ENCODE measurements at regions of chr3 and their contacts with region 1.

Region 1: GRCh38 chr3:66138336-66139313 is 82.2 kb upstream of the SLC25A26 start:
- DNase-seq: peak; percentile 65
- ATAC-seq: peak; percentile 93
- H3K4me3 ChIP-seq: no peak overlapping the region
- H3K27ac ChIP-seq: no peak overlapping the region
- H3K4me1 ChIP-seq: no peaks in the 10 kb centered on the region
- H3K27me3 ChIP-seq: peaks cover 0 to under 1% of the 10 kb centered on the region in 2 experiments; a peak in 1 of 5 replicates
- CTCF ChIP-seq: peak; percentile 87
- EP300 ChIP-seq: no peak
- POLR2A ChIP-seq: no peak
- RAD21 ChIP-seq: peak; percentile 86

Region 2: DNA sequence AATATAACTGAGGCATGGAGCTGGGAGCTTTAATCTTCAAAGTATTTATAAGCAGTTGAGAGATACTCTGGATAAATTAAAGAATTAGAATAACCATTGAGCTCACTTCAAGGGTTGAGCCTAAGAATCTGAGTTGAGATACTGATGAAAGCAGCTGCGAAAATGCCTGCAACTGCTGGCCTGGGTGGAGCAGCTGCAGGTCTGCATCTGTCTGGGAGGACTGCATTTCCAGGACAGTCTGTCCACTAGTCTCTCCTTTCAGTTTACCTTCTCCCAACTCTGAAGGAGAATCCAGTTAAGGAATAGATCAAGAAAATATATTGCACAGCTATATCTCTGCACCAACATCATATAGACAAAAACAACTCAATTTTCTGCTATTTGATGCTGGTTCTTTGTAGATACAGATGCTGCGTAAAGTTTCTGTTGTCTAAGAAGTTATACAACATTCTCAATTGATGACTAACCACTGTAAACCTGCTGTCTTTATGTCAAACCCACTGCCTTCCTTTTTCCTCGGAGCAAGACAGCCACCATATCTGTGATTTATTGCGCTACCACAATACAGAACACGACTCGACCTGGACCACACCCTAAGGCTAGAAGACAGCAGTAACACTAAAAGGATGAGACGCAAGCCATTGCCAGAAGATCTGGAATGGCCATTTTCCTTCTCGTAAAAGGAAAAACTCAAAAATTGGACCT is 345.0 kb before region 1 on chr3:
- CTCF ChIA-PET with region 1: no interaction called
- POLR2A ChIA-PET with region 1: no interaction called
- in situ Hi-C with region 1: loop called (anchors 5 kb)
- intact Hi-C with region 1: loop called (anchors 2 kb)
- DNase-seq: no peak
- ATAC-seq: no peak
- H3K4me3 ChIP-seq: no peak overlapping the region
- H3K27ac ChIP-seq: no peak overlapping the region
- H3K4me1 ChIP-seq: no peaks in the 10 kb centered on the region
- H3K27me3 ChIP-seq: no peaks in the 10 kb centered on the region
- CTCF ChIP-seq: no peak
- EP300 ChIP-seq: no peak
- POLR2A ChIP-seq: no peak
- RAD21 ChIP-seq: no peak

Region 3: DNA sequence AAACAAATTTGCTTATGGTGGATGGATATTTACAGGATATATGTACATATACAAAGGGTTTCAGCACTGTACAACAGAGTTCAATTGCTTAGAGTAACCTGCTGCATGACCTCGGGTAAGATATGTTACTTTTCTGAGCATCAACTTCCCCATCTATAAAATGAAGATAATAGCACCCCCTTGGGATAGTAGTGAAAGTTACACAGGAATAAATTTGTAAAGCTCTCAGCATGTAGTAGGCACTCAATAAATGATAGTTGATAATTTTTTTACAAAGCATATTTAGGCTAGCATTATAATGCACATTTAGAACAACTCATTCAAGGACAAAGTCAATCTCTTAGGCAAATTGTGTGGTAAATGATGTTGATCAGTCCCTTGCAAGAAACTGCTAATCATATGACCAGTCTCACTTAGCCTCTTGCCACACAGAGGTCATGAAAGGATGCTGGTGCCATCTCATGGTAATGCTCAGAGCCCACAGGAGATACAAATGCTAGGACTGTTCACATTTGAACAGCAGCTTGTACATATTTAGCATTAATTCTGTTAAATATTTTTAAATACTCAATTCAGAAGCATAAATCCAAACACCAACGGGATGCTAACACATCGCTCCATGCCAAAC is 223.8 kb before region 1 on chr3:
- CTCF ChIA-PET with region 1: no interaction called
- POLR2A ChIA-PET with region 1: no interaction called
- in situ Hi-C with region 1: no loop called
- intact Hi-C with region 1: loop called (anchors 1 kb)
- DNase-seq: no peak
- ATAC-seq: no peak
- H3K4me3 ChIP-seq: no peak overlapping the region
- H3K27ac ChIP-seq: no peak overlapping the region
- H3K4me1 ChIP-seq: peaks cover 7% of the 10 kb centered on the region
- H3K27me3 ChIP-seq: no peaks in the 10 kb centered on the region
- CTCF ChIP-seq: no peak; the same call in 1 of the 2 replicates
- EP300 ChIP-seq: no peak
- POLR2A ChIP-seq: no peak
- RAD21 ChIP-seq: no peak

Region 4: GRCh38 chr3:65963787-65964677 is 174.6 kb before region 1 on chr3:
- CTCF ChIA-PET with region 1: no interaction called
- POLR2A ChIA-PET with region 1: no interaction called
- in situ Hi-C with region 1: no loop called
- intact Hi-C with region 1: loop called (anchors 5 kb)
- DNase-seq: peak; percentile 47
- ATAC-seq: peak; percentile 53
- H3K4me3 ChIP-seq: no peak overlapping the region
- H3K27ac ChIP-seq: peak overlapping the region; percentile 23
- H3K4me1 ChIP-seq: peaks cover 56% of the 10 kb centered on the region
- H3K27me3 ChIP-seq: no peaks in the 10 kb centered on the region
- CTCF ChIP-seq: no peak
- EP300 ChIP-seq: no peak
- POLR2A ChIP-seq: no peak
- RAD21 ChIP-seq: no peak

Region 5: DNA sequence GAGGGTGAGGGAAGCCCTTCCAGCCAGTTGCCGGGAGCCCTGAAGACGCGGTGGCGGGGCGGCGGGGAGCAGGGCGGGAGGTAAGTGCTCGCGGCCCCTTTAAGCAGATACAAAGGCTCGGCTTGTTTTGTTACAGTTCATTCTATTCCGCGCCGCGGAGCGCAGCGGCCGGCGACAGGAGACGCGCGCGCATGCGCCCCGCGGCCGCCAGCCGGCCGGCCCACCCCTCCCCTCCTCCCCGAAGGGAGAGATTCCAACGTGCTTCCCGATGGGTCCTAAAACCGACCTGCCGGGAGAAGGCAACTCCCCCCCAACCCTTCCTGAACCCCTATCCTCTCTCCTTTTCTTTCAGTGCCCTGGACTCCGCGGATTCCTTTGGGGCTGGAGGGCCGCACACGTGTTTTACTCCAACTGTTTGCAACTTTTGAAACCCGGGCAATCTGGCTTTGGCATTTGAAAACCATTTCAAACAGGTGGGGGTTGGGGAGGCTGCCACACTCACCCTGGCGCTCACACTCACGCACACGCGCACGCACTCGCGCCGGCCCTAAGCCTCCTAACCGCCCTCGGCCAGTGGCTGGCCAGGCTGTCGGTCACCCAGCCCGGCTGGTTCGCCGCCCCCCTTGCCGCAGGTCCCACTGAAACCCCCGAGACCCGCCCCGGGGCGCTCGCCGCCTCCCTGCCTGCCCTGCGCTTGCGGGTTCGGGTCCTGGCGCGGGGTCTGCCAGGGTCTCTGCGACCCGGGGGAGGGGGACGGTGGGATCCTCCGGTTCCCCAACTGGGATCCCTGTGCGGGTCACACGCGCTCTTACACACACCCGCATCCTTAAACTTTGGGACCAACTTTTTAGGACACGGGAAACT is 99.7 kb before region 1 on chr3 and contains the start of gene MAGI1:
- CTCF ChIA-PET with region 1: no interaction called
- POLR2A ChIA-PET with region 1: no interaction called
- in situ Hi-C with region 1: no loop called
- intact Hi-C with region 1: loop called (anchors 2 kb)
- DNase-seq: peak; percentile 90
- ATAC-seq: peak; percentile 87
- H3K4me3 ChIP-seq: peak within 1 kb of the TSS; percentile 85 to 97 (median 92)
- H3K27ac ChIP-seq: peak within 1 kb of the TSS; percentile 98
- H3K4me1 ChIP-seq: peaks cover 54% of the 10 kb centered on the region
- H3K27me3 ChIP-seq: no peaks in the 10 kb centered on the region; a peak in 1 of 5 replicates
- CTCF ChIP-seq: no peak; the same call in 1 of the 2 replicates
- EP300 ChIP-seq: no peak
- POLR2A ChIP-seq: peak; percentile 32 to 39; a peak in 2 of 4 replicates
- RAD21 ChIP-seq: no peak
- total RNA-seq, gene MAGI1: 25.3 and 26.0 TPM in 2 replicates

Region 6: DNA sequence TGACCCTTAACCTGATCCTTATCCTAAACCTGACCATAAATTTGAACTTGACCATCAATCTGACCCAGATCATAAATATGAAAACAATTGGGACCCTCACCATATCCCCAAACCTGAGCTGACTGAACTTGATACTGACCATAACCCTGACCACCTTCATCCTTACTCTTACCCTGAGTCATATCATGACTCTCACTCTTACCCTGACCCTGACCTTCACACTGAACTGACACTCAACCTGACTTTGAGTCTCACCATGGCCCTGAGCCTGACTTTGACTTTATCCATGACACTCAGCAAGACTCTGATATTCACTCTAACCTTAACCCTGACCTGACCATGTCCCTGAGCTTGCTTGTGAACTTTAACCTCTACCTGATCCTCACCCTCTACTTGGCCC is 47.9 kb after region 1 on chr3:
- CTCF ChIA-PET with region 1: no interaction called
- POLR2A ChIA-PET with region 1: no interaction called
- in situ Hi-C with region 1: no loop called
- intact Hi-C with region 1: no loop called
- DNase-seq: no peak
- ATAC-seq: no peak
- H3K4me3 ChIP-seq: no peak overlapping the region
- H3K27ac ChIP-seq: no peak overlapping the region
- H3K4me1 ChIP-seq: no peaks in the 10 kb centered on the region
- H3K27me3 ChIP-seq: no peaks in the 10 kb centered on the region
- CTCF ChIP-seq: no peak
- EP300 ChIP-seq: no peak
- POLR2A ChIP-seq: no peak
- RAD21 ChIP-seq: no peak

Measured in HepG2 (cell line).